ENCODE measurements at regions of chr1 and their contacts with region 1.

Region 1: DNA sequence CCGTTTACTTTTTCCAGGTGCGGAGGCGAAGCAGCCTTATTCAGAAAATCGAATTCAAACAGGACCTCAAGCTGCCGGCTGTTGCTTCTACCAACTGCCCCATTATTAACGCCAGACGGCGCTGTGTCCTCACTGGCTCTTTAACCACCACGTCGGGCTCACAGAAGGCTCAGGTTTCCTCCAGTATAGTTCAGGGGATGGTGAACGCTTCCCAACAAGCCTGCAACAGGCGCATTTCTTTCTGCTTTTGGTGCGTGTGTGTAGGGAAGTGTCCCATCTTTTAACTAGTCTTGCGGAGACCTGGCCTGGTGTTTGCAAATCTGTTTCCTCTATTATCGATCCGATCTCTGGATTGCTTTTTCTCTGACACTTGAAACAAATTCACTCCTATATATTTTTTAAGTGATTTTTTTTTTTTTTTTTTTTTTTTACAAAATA is 791 bp upstream of the STUM start:
- DNase-seq: peak; percentile 88 to 89
- H3K4me3 ChIP-seq: peak overlapping the region in 1 of 2 donors; percentile 55
- H3K27ac ChIP-seq: peak overlapping the region; percentile 43 to 65
- H3K4me1 ChIP-seq: peaks cover under 1 to 4% of the 10 kb centered on the region in 2 donors
- H3K27me3 ChIP-seq: no peaks in the 10 kb centered on the region
- CTCF ChIP-seq: peak; percentile 86 to 94 (median 90)
- POLR2A ChIP-seq: no peak

Region 2: GRCh38 chr1:226608699-226609505 is 61.1 kb after region 1 on chr1:
- intact Hi-C with region 1: loop called (anchors 10 kb)
- DNase-seq: peak; percentile 70 to 79
- H3K4me3 ChIP-seq: no peak overlapping the region
- H3K27ac ChIP-seq: peak overlapping the region in 1 of 2 donors; percentile 61
- H3K4me1 ChIP-seq: peaks cover 0 to 4% of the 10 kb centered on the region in 2 donors
- H3K27me3 ChIP-seq: no peaks in the 10 kb centered on the region
- CTCF ChIP-seq: peak; percentile 51 to 85 (median 61)
- POLR2A ChIP-seq: no peak

Region 3: DNA sequence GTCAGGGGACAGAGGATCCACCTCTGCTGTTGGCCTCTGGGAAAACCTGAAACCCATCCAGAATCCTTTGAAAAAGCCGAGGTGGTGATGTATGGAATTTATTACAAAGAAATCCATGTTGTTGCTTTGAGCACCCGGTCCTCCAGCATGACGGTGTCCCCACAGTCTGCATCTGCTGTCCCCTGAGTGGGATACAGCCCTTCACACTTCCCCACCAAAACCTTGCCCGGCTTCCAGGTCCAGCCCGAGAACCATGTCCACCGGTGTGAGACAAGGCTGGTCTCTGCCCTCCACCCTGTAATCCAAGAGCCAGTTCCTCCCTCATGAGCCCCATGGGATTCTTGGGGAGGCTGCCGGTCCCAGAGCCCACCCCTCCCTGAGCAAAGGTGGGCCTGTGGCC is 71.3 kb after region 1 on chr1:
- intact Hi-C with region 1: no loop called
- DNase-seq: peak; percentile 5 to 7
- H3K4me3 ChIP-seq: no peak overlapping the region
- H3K27ac ChIP-seq: no peak overlapping the region
- H3K4me1 ChIP-seq: no peaks in the 10 kb centered on the region
- H3K27me3 ChIP-seq: no peaks in the 10 kb centered on the region
- CTCF ChIP-seq: no peak
- POLR2A ChIP-seq: no peak

Region 4: GRCh38 chr1:226827968-226828513 is 280.3 kb after region 1 on chr1:
- intact Hi-C with region 1: loop called (anchors 10 kb)
- DNase-seq: peak; percentile 97
- H3K4me3 ChIP-seq: peak overlapping the region; percentile 0 to 13
- H3K27ac ChIP-seq: peak overlapping the region; percentile 89 to 96
- H3K4me1 ChIP-seq: peaks cover 0 to 6% of the 10 kb centered on the region in 2 donors
- H3K27me3 ChIP-seq: no peaks in the 10 kb centered on the region
- CTCF ChIP-seq: peak; percentile 95 to 98 (median 96)
- POLR2A ChIP-seq: peak in 1 of 2 donors; percentile 4

Measured in uterus (tissue), 4 donors.